ENCODE measurements at regions of chr11 and their contacts with region 1.

Region 1: GRCh38 chr11:1515082-1516060 is 28.8 kb upstream of the MOB2 start:
- DNase-seq: peak; percentile 86
- ATAC-seq: peak; percentile 93

Region 2: GRCh38 chr11:1202776-1203504 is 312.4 kb before region 1 on chr11:
- intact Hi-C with region 1: loop called (anchors 5 kb)
- DNase-seq: peak; percentile 80
- ATAC-seq: peak; percentile 85

Region 3: GRCh38 chr11:1458340-1459218 is 56.8 kb before region 1 on chr11:
- intact Hi-C with region 1: loop called (anchors 5 kb)
- DNase-seq: peak; percentile 75
- ATAC-seq: peak; percentile 56